ENCODE measurements at regions of chr9 and their contacts with region 1.

Region 1: DNA sequence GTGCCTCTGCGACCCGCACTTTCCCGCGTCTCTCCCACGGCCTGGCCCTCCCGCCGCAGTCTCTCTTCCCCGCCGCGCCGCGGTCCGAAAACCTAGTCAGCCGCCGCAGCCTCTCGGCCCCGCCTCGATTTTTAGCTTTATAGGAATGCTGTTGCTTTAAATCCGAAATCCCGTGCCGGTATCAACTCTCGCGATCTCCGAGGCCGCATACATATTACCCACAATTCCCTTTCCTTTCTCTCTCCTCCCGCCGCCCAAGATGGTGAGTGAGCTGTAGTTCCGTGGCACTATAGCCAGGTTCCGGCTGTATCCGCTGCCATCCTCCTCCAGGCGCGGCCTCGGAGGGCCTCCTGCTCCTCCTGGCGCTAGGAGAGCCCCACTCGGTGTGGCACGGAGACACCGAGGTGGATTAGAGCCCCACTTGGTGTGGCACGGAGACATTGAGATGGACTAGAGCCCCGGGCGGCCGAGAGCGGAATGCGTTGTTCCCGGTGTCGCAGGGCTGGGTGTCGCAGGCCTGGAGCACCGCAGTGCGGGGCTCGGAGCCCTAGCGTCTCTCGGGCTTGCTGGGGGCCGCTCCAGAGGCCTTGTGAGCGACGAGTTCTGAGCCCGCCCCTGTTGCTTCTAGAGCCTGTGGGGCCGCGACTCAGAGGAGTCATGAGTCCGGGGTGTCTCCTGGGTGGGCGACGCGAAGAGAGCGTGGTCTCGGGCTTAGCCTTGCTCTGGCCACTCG is at the starts of genes MED22 and RPL7A:
- DNase-seq: peak; percentile 98
- ATAC-seq: peak; percentile 78
- H3K4me3 Mint-ChIP-seq: peak within 1 kb of the TSS; percentile 98
- H3K27ac Mint-ChIP-seq: peak within 1 kb of the TSS; percentile 99
- H3K4me1 Mint-ChIP-seq: peaks cover 41% of the 10 kb centered on the region
- H3K27me3 Mint-ChIP-seq: no peaks in the 10 kb centered on the region
- CTCF ChIP-seq: no peak
- total RNA-seq, gene MED22: 23.4 to 29.0 TPM
- total RNA-seq, gene RPL7A: 3,479 to 3,507 TPM

Region 2: GRCh38 chr9:133335878-133336811 is 12.0 kb before region 1 on chr9 and contains the start of gene SURF6:
- CTCF ChIA-PET with region 1: interaction called, 7 read pairs
- POLR2A ChIA-PET with region 1: interaction called, 872 read pairs
- intact Hi-C with region 1: no loop called
- DNase-seq: peak; percentile 95
- ATAC-seq: peak; percentile 96
- H3K4me3 Mint-ChIP-seq: peak within 1 kb of the TSS; percentile 97
- H3K27ac Mint-ChIP-seq: peak within 1 kb of the TSS; percentile 94
- H3K4me1 Mint-ChIP-seq: peaks cover 47% of the 10 kb centered on the region
- H3K27me3 Mint-ChIP-seq: no peaks in the 10 kb centered on the region
- CTCF ChIP-seq: no peak
- total RNA-seq, gene SURF6: 24.9 to 28.3 TPM

Region 3: GRCh38 chr9:133532937-133533668 is 185.0 kb after region 1 on chr9:
- CTCF ChIA-PET with region 1: no interaction called
- POLR2A ChIA-PET with region 1: no interaction called
- intact Hi-C with region 1: no loop called
- DNase-seq: peak; percentile 87
- ATAC-seq: peak; percentile 85
- H3K4me3 Mint-ChIP-seq: no peak overlapping the region
- H3K27ac Mint-ChIP-seq: no peak overlapping the region
- H3K4me1 Mint-ChIP-seq: peaks cover 12% of the 10 kb centered on the region
- H3K27me3 Mint-ChIP-seq: peaks cover 5% of the 10 kb centered on the region
- CTCF ChIP-seq: peak; percentile 55